Sciatic nerve (tissue), 2 donors: ENCODE measurements at regions of chr11 and their contacts with region 1.

Region 1: GRCh38 chr11:66958232-66958955 is at the start of gene PC:
- DNase-seq: peak; percentile 99
- ATAC-seq: peak; percentile 98
- total RNA-seq, gene PC: 103 TPM

Region 2: DNA sequence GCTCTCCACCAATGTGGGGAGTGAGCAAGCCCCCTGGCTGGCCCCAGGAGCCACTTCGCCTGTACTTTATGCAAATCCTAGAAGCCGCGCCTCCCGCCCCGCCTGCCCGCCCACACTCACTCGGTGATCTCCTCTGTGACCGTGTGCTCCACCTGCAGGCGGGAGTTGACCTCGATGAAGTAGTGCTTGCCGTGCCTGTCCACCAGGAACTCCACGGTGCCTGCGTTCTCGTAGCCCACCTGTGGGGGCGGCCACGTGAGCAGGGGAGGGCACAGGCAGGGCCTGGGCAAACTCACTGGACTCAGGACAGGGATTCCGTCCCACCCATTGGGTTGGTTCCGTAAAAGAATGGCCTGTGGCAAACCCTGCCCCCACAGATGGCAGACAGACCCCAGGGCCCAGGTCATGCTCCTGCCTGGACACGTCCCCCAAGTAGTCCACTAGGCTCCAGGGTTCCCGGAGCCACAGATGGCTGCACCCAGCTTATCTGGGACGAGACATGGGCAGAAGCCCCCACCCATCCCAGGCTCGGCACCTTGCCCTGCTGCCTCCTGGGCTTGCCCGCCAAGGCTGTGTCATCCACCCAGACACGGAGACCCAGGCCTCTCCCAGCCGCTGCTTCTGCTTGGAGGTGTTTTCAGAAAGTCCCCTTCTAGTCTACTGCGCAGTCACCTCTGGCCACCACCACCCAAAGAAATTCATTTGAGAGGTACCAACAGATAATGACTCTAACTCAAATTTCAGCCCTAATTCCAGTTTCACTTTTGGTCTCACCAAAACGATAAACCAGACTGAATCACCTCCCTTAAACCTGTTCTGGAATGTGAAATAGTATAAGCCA is 89.4 kb before region 1 on chr11:
- intact Hi-C with region 1: loop called (anchors 10 kb)
- DNase-seq: no peak
- ATAC-seq: no peak